ENCODE measurements at regions of chr6 and their contacts with region 1.

Region 1: GRCh38 chr6:118565311-118565960 is 17.3 kb downstream of the PLN start:
- DNase-seq: no peak
- ATAC-seq: peak; percentile 92
- H3K4me3 Mint-ChIP-seq: no peak overlapping the region
- H3K27ac Mint-ChIP-seq: no peak overlapping the region
- H3K4me1 Mint-ChIP-seq: peaks cover 20% of the 10 kb centered on the region
- H3K27me3 Mint-ChIP-seq: no peaks in the 10 kb centered on the region

Region 2: GRCh38 chr6:118387764-118388701 is 177.4 kb before region 1 on chr6:
- CTCF ChIA-PET with region 1: no interaction called
- POLR2A ChIA-PET with region 1: no interaction called
- intact Hi-C with region 1: no loop called
- DNase-seq: no peak
- ATAC-seq: no peak
- H3K4me3 Mint-ChIP-seq: no peak overlapping the region
- H3K27ac Mint-ChIP-seq: no peak overlapping the region
- H3K4me1 Mint-ChIP-seq: peaks cover 3% of the 10 kb centered on the region
- H3K27me3 Mint-ChIP-seq: no peaks in the 10 kb centered on the region

Region 3: GRCh38 chr6:118580585-118581419 is 15.4 kb after region 1 on chr6:
- CTCF ChIA-PET with region 1: interaction called, 10 read pairs
- POLR2A ChIA-PET with region 1: no interaction called
- intact Hi-C with region 1: no loop called
- DNase-seq: peak; percentile 19
- ATAC-seq: peak; percentile 77
- H3K4me3 Mint-ChIP-seq: no peak overlapping the region
- H3K27ac Mint-ChIP-seq: peak overlapping the region; percentile 80
- H3K4me1 Mint-ChIP-seq: no peaks in the 10 kb centered on the region
- H3K27me3 Mint-ChIP-seq: no peaks in the 10 kb centered on the region

Region 4: GRCh38 chr6:118618679-118619377 is 53.4 kb after region 1 on chr6:
- CTCF ChIA-PET with region 1: interaction called, 9 read pairs
- POLR2A ChIA-PET with region 1: no interaction called
- intact Hi-C with region 1: loop called (anchors 1 to 2 kb)
- DNase-seq: peak; percentile 78
- ATAC-seq: peak; percentile 94
- H3K4me3 Mint-ChIP-seq: no peak overlapping the region
- H3K27ac Mint-ChIP-seq: no peak overlapping the region
- H3K4me1 Mint-ChIP-seq: peaks cover 39% of the 10 kb centered on the region
- H3K27me3 Mint-ChIP-seq: no peaks in the 10 kb centered on the region

Region 5: GRCh38 chr6:118746145-118746824 is 180.8 kb after region 1 on chr6:
- CTCF ChIA-PET with region 1: no interaction called
- POLR2A ChIA-PET with region 1: no interaction called
- intact Hi-C with region 1: no loop called
- DNase-seq: no peak
- ATAC-seq: no peak
- H3K4me3 Mint-ChIP-seq: no peak overlapping the region
- H3K27ac Mint-ChIP-seq: no peak overlapping the region
- H3K4me1 Mint-ChIP-seq: peaks cover 23% of the 10 kb centered on the region
- H3K27me3 Mint-ChIP-seq: no peaks in the 10 kb centered on the region

Region 6: GRCh38 chr6:118776607-118777549 is 211.4 kb after region 1 on chr6:
- CTCF ChIA-PET with region 1: interaction called, 15 read pairs
- POLR2A ChIA-PET with region 1: no interaction called
- intact Hi-C with region 1: loop called (anchors 1 kb)
- DNase-seq: peak; percentile 78
- ATAC-seq: peak; percentile 92
- H3K4me3 Mint-ChIP-seq: no peak overlapping the region
- H3K27ac Mint-ChIP-seq: peak overlapping the region; percentile 10
- H3K4me1 Mint-ChIP-seq: peaks cover 22% of the 10 kb centered on the region
- H3K27me3 Mint-ChIP-seq: no peaks in the 10 kb centered on the region

Region 7: GRCh38 chr6:118787724-118788423 is 222.4 kb after region 1 on chr6:
- CTCF ChIA-PET with region 1: interaction called, 10 read pairs
- POLR2A ChIA-PET with region 1: no interaction called
- intact Hi-C with region 1: no loop called
- DNase-seq: no peak
- ATAC-seq: peak; percentile 40
- H3K4me3 Mint-ChIP-seq: no peak overlapping the region
- H3K27ac Mint-ChIP-seq: peak overlapping the region; percentile 51
- H3K4me1 Mint-ChIP-seq: peaks cover 35% of the 10 kb centered on the region
- H3K27me3 Mint-ChIP-seq: no peaks in the 10 kb centered on the region

Region 8: GRCh38 chr6:118800394-118801071 is 235.1 kb after region 1 on chr6:
- CTCF ChIA-PET with region 1: interaction called, 11 read pairs
- POLR2A ChIA-PET with region 1: no interaction called
- intact Hi-C with region 1: loop called (anchors 1 to 2 kb)
- DNase-seq: peak; percentile 89
- ATAC-seq: peak; percentile 96
- H3K4me3 Mint-ChIP-seq: no peak overlapping the region
- H3K27ac Mint-ChIP-seq: peak overlapping the region; percentile 7
- H3K4me1 Mint-ChIP-seq: peaks cover 28% of the 10 kb centered on the region
- H3K27me3 Mint-ChIP-seq: no peaks in the 10 kb centered on the region

Region 9: GRCh38 chr6:119105282-119105681 is 539.8 kb after region 1 on chr6:
- CTCF ChIA-PET with region 1: interaction called, 3 read pairs
- POLR2A ChIA-PET with region 1: no interaction called
- intact Hi-C with region 1: loop called (anchors 10 kb)
- DNase-seq: no peak
- ATAC-seq: peak; percentile 45
- H3K4me3 Mint-ChIP-seq: no peak overlapping the region
- H3K27ac Mint-ChIP-seq: no peak overlapping the region
- H3K4me1 Mint-ChIP-seq: peaks cover 25% of the 10 kb centered on the region
- H3K27me3 Mint-ChIP-seq: no peaks in the 10 kb centered on the region

Measured in activated CD4-positive, alpha-beta T cell treated with anti-CD3 and anti-CD28 coated beads for 36 hours (primary cell).